B cell (primary cell): ENCODE measurements at regions of chr15 and their contacts with region 1.

Region 1: DNA sequence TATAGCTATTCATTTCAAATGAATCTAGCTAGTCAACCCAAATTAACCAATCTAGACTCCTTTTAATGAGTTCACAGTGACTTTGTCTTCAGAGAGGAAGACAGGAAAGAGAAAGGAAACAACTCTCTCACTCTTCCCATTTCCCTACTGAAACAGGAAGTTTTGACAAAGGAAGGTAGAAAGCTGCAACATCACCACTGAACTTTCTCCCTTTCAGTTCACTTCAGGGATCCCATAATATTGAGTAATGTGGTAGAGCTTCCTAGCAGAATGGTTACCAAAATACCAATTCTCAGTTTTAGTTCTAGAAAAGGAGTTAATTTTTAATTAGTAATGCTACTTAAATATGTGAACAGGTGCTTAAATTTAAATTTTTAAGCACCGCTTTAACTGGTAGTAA is 7.5 kb downstream of the VPS13C start:
- DNase-seq: no peak
- ATAC-seq: no peak
- H3K4me3 ChIP-seq: no peak overlapping the region
- H3K4me3 Mint-ChIP-seq: no peak overlapping the region
- H3K27ac ChIP-seq: peak overlapping the region; percentile 10 to 65
- H3K27ac Mint-ChIP-seq: no peak overlapping the region
- H3K4me1 ChIP-seq: peaks cover 19 to 32% of the 10 kb centered on the region in 2 donors
- H3K4me1 Mint-ChIP-seq: peaks cover 57% of the 10 kb centered on the region
- H3K27me3 ChIP-seq: no peaks in the 10 kb centered on the region
- H3K27me3 Mint-ChIP-seq: no peaks in the 10 kb centered on the region
- CTCF ChIP-seq: no peak

Region 2: GRCh38 chr15:61989667-61990066 is 63.0 kb before region 1 on chr15:
- CTCF ChIA-PET with region 1: no interaction called
- POLR2A ChIA-PET with region 1: no interaction called
- intact Hi-C with region 1: no loop called
- DNase-seq: no peak
- ATAC-seq: no peak
- H3K4me3 ChIP-seq: no peak overlapping the region
- H3K4me3 Mint-ChIP-seq: no peak overlapping the region
- H3K27ac ChIP-seq: no peak overlapping the region
- H3K27ac Mint-ChIP-seq: no peak overlapping the region
- H3K4me1 ChIP-seq: no peaks in the 10 kb centered on the region
- H3K4me1 Mint-ChIP-seq: no peaks in the 10 kb centered on the region
- H3K27me3 ChIP-seq: no peaks in the 10 kb centered on the region
- H3K27me3 Mint-ChIP-seq: no peaks in the 10 kb centered on the region
- CTCF ChIP-seq: no peak

Region 3: GRCh38 chr15:62035256-62035908 is 17.3 kb before region 1 on chr15:
- CTCF ChIA-PET with region 1: no interaction called
- POLR2A ChIA-PET with region 1: no interaction called
- intact Hi-C with region 1: loop called (anchors 2 kb)
- DNase-seq: no peak
- ATAC-seq: no peak
- H3K4me3 ChIP-seq: no peak overlapping the region
- H3K4me3 Mint-ChIP-seq: no peak overlapping the region
- H3K27ac ChIP-seq: no peak overlapping the region
- H3K27ac Mint-ChIP-seq: no peak overlapping the region
- H3K4me1 ChIP-seq: no peaks in the 10 kb centered on the region
- H3K4me1 Mint-ChIP-seq: peaks cover 6% of the 10 kb centered on the region
- H3K27me3 ChIP-seq: no peaks in the 10 kb centered on the region
- H3K27me3 Mint-ChIP-seq: no peaks in the 10 kb centered on the region
- CTCF ChIP-seq: no peak

Region 4: GRCh38 chr15:62403164-62403809 is 350.6 kb after region 1 on chr15:
- CTCF ChIA-PET with region 1: no interaction called
- POLR2A ChIA-PET with region 1: no interaction called
- intact Hi-C with region 1: no loop called
- DNase-seq: no peak
- ATAC-seq: no peak
- H3K4me3 ChIP-seq: no peak overlapping the region
- H3K4me3 Mint-ChIP-seq: no peak overlapping the region
- H3K27ac ChIP-seq: no peak overlapping the region
- H3K27ac Mint-ChIP-seq: no peak overlapping the region
- H3K4me1 ChIP-seq: no peaks in the 10 kb centered on the region
- H3K4me1 Mint-ChIP-seq: no peaks in the 10 kb centered on the region
- H3K27me3 ChIP-seq: peaks cover 0 to 2% (median 0%) of the 10 kb centered on the region in 4 experiments
- H3K27me3 Mint-ChIP-seq: peaks cover 44% of the 10 kb centered on the region
- CTCF ChIP-seq: no peak

Region 5: GRCh38 chr15:63539521-63539920 is 1486.8 kb after region 1 on chr15:
- CTCF ChIA-PET with region 1: no interaction called
- POLR2A ChIA-PET with region 1: no interaction called
- intact Hi-C with region 1: no loop called
- DNase-seq: no peak
- ATAC-seq: no peak
- H3K4me3 ChIP-seq: no peak overlapping the region
- H3K4me3 Mint-ChIP-seq: no peak overlapping the region
- H3K27ac ChIP-seq: peak overlapping the region in 1 of 2 donors; percentile 68
- H3K27ac Mint-ChIP-seq: peak overlapping the region; percentile 48
- H3K4me1 ChIP-seq: peaks cover 41 to 58% of the 10 kb centered on the region in 2 donors
- H3K4me1 Mint-ChIP-seq: peaks cover 74% of the 10 kb centered on the region
- H3K27me3 ChIP-seq: no peaks in the 10 kb centered on the region
- H3K27me3 Mint-ChIP-seq: no peaks in the 10 kb centered on the region
- CTCF ChIP-seq: no peak